ENCODE measurements at regions of chr5 and their contacts with region 1.

Region 1: GRCh38 chr5:39117401-39117800 is 43.2 kb upstream of the RICTOR start:
- DNase-seq: no peak
- ATAC-seq: no peak
- H3K4me3 ChIP-seq: no peak overlapping the region
- H3K4me3 Mint-ChIP-seq: no peak overlapping the region
- H3K27ac ChIP-seq: no peak overlapping the region
- H3K27ac Mint-ChIP-seq: peak overlapping the region; percentile 68 to 81
- H3K4me1 ChIP-seq: no peaks in the 10 kb centered on the region
- H3K4me1 Mint-ChIP-seq: peaks cover 33 to 44% (median 37%) of the 10 kb centered on the region in 3 donors
- H3K27me3 ChIP-seq: no peaks in the 10 kb centered on the region
- H3K27me3 Mint-ChIP-seq: no peaks in the 10 kb centered on the region

Region 2: GRCh38 chr5:38979535-38979934 is 137.9 kb before region 1 on chr5:
- CTCF ChIA-PET with region 1: no interaction called
- POLR2A ChIA-PET with region 1: interaction called in 1 of 2 experiments, 18 read pairs
- DNase-seq: no peak
- ATAC-seq: no peak
- H3K4me3 ChIP-seq: no peak overlapping the region
- H3K4me3 Mint-ChIP-seq: no peak overlapping the region
- H3K27ac ChIP-seq: no peak overlapping the region
- H3K27ac Mint-ChIP-seq: no peak overlapping the region
- H3K4me1 ChIP-seq: no peaks in the 10 kb centered on the region
- H3K4me1 Mint-ChIP-seq: peaks cover 2 to 8% (median 4%) of the 10 kb centered on the region in 3 donors
- H3K27me3 ChIP-seq: no peaks in the 10 kb centered on the region
- H3K27me3 Mint-ChIP-seq: no peaks in the 10 kb centered on the region

Measured in T-cell (primary cell).